ENCODE measurements at regions of chr1 and their contacts with region 1.

Region 1: DNA sequence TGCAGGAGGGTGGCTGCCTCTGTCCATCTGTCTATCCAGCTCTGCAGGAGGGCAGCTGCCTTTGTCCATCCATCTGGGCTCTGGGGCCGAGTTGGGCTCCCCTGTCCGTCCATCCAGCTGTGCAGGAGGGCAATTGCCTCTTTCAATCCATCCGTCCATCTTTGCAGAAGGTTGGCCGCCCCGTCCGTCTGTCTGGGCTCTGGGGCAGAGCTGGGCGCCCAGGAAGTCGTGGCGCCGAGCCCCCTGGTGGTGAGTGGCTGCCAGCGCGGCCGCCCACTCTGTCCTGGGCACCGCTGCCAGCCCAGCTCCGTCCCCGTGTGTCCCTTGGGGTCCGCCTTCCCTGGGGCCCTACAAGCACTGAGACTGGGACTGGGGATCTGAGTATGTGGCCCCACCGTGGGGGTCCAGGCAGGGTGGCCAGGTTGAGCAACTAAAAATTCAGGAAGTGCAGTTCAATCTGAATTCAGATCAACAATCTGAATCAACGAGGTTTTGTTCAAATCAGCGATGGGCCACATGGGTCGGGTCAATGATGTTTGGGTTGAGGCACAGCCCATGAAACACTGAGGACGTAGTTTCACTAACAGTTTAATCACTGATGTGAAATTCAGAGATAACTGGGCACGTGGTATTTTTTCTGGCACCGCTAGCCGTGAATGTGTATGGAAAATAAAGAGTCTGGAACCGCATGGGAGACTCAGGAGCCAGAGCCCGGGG is 99.1 kb upstream of the ACTRT2 start:
- DNase-seq: peak; percentile 48
- H3K4me3 Mint-ChIP-seq: no peak overlapping the region
- H3K27ac Mint-ChIP-seq: no peak overlapping the region
- H3K4me1 Mint-ChIP-seq: no peaks in the 10 kb centered on the region
- H3K27me3 Mint-ChIP-seq: no peaks in the 10 kb centered on the region

Region 2: GRCh38 chr1:2821966-2822620 is 100.0 kb before region 1 on chr1:
- CTCF ChIA-PET with region 1: interaction called, 14 read pairs
- DNase-seq: peak; percentile 67
- H3K4me3 Mint-ChIP-seq: no peak overlapping the region
- H3K27ac Mint-ChIP-seq: no peak overlapping the region
- H3K4me1 Mint-ChIP-seq: no peaks in the 10 kb centered on the region
- H3K27me3 Mint-ChIP-seq: peaks cover 16% of the 10 kb centered on the region

Region 3: GRCh38 chr1:2936559-2937515 is 14.7 kb after region 1 on chr1:
- CTCF ChIA-PET with region 1: no interaction called
- DNase-seq: no peak
- H3K4me3 Mint-ChIP-seq: no peak overlapping the region
- H3K27ac Mint-ChIP-seq: no peak overlapping the region
- H3K4me1 Mint-ChIP-seq: no peaks in the 10 kb centered on the region
- H3K27me3 Mint-ChIP-seq: no peaks in the 10 kb centered on the region